H1 (cell line): ENCODE measurements at regions of chr17 and their contacts with region 1.

Region 1: DNA sequence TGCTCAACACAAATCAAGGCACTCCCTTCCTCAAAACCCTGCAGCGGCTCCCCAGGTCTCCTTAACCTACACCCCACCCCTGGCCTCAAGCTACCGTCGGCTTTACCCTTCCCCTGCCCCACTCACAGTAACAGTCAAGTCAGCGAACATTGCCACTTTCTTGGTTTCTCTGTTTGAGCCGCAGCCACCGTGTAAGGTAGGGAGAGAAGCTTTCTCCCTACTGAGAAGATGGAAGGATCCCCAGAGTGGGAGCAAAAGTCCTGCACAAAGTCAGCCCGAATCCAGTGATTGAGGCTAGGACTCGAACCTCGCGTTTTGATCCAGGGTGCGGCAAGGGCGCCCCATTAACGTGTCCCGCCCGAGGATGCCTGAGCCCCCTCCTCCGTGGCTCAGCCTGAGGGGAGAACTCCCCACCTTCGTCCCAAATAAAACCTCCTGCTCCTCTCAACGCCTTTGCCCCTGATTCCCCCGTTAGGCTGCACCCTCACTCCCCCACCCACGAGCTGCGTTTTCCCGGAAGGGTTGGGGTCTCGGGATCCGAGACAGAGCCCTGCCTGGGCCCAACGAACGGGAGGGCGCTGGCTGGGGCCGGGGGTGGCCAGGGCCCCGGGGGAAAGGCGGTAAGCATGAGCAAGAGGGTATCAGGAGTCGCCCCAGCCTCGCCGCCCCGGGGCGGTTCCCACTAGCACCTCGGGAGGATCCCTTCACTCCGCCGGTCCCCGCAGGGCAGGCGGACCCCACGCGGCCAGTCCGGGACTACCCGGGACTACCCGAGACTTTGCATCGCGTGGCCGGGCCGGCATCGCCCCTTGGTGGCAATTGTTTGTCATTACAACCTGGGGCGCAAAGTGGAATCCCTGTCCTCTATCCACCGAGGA is 9.9 kb upstream of the NAGS start:
- DNase-seq: peak in 1 of 2 experiments; percentile 92
- H3K4me3 ChIP-seq: peak overlapping the region; percentile 12 to 67 (median 42)
- H3K27ac ChIP-seq: no peak overlapping the region
- H3K4me1 ChIP-seq: peaks cover 0 to 2% (median 0%) of the 10 kb centered on the region in 4 experiments; a peak in 1 of 7 replicates
- H3K27me3 ChIP-seq: peaks cover 0 to 9% (median 4%) of the 10 kb centered on the region in 4 experiments; a peak in 5 of 7 replicates
- CTCF ChIP-seq: peak; percentile 81 to 97 (median 83)
- EP300 ChIP-seq: no peak
- POLR2A ChIP-seq: no peak
- RAD21 ChIP-seq: peak; percentile 91 to 94

Region 2: GRCh38 chr17:43927060-43927864 is 67.2 kb before region 1 on chr17:
- CTCF ChIA-PET with region 1: interaction called, 11 read pairs
- POLR2A ChIA-PET with region 1: no interaction called
- DNase-seq: no peak
- H3K4me3 ChIP-seq: peak overlapping the region; percentile 10 to 55 (median 34); a peak in 5 of 8 replicates
- H3K27ac ChIP-seq: no peak overlapping the region
- H3K4me1 ChIP-seq: peaks cover 0 to 7% (median 0%) of the 10 kb centered on the region in 4 experiments; a peak in 1 of 7 replicates
- H3K27me3 ChIP-seq: peaks cover 3 to 28% (median 15%) of the 10 kb centered on the region in 4 experiments
- CTCF ChIP-seq: no peak
- EP300 ChIP-seq: no peak
- POLR2A ChIP-seq: no peak
- RAD21 ChIP-seq: no peak

Region 3: DNA sequence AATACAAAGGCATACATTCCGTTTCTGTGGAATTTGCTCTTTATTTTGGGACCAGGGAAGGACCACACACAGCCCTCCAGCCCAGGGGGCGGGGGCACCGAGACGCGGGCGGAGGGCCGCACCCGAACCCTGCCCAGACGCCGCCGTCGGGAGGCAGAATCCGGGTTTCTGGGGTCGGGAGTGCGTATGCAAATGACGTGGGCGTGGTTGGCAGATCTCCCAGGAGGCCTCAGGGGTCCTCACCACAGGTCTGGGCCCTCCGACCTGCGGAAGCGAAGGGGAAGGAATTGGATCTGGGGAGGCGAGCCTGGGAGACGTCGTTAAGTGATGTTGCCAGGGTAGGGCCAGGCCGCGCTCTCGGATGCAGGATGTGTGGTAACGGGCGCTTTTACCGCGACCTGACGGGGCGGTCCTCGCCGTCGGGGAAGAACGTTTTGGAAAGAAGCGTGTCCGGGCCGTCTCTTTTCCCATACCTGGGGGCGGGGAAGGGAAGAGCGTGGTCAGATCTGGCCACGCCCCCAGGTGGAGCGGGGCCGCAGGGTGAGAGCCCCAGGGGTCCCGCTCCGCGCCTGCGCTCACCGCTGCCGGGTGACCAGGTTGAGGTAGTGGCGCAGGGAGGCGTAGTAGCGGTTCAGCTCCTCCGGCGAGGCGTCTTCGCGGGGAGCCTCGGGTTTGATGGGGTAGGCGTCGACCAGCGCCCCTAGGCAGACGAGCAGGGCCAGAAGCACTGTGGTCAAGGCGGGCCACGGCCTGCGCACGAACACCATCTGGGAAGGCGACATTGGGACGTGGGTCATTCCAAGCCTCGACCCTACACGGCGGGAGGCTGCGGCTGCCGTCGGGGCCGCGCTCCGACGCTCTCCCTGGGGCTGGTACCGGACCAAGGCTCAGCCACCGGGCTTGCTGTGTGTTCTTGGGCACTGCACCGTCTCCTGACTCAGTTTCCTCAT is 41.5 kb before region 1 on chr17:
- CTCF ChIA-PET with region 1: interaction called, 13 read pairs
- POLR2A ChIA-PET with region 1: interaction called, 3 read pairs
- DNase-seq: peak; percentile 66 to 93
- H3K4me3 ChIP-seq: peak overlapping the region; percentile 61 to 73 (median 70)
- H3K27ac ChIP-seq: peak overlapping the region; percentile 80
- H3K4me1 ChIP-seq: peaks cover 5 to 15% (median 12%) of the 10 kb centered on the region in 4 experiments
- H3K27me3 ChIP-seq: peaks cover 2 to 25% (median 18%) of the 10 kb centered on the region in 4 experiments; a peak in 6 of 7 replicates
- CTCF ChIP-seq: no peak
- EP300 ChIP-seq: no peak
- POLR2A ChIP-seq: peak in 1 of 2 experiments; percentile 75; a peak in 2 of 3 replicates
- RAD21 ChIP-seq: no peak

Region 4: DNA sequence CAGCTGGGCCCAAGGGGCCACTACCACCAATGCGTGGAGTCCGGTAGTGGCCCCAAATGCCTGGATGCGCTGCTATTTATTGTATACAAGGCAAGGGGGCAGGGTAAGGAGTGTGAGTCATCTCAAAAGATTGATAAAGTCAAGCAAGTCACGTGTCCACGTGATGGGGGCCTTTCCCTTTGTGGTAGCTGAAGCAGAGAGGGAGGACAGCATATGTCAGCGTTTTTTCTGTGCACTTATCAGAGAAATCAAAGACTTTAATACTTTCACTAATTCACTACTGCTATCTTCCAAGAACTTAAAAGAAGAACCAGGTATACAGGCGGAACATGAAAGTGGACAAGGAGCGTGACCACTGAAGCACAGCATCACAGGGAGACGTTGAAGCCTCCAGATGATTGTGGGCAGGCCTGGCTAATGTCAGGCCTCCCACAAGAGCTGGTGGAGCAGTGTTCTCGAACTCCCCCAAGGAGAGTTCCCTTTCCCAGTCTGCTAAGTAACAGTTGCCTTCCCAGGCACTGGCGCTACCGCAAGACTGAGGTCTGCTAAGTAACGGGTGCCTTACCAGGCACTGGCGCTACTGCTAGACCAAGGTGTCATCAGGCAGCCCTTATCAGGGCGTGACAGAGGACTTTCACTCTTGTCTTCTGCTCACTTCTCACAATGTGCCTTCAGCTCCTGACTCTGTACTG is 165.2 kb after region 1 on chr17:
- CTCF ChIA-PET with region 1: no interaction called
- POLR2A ChIA-PET with region 1: no interaction called
- DNase-seq: no peak
- H3K4me3 ChIP-seq: no peak overlapping the region
- H3K27ac ChIP-seq: no peak overlapping the region
- H3K4me1 ChIP-seq: no peaks in the 10 kb centered on the region
- H3K27me3 ChIP-seq: no peaks in the 10 kb centered on the region
- CTCF ChIP-seq: no peak
- EP300 ChIP-seq: no peak
- POLR2A ChIP-seq: no peak
- RAD21 ChIP-seq: no peak